ENCODE measurements at regions of chr20 and their contacts with region 1.

Region 1: GRCh38 chr20:47677635-47678453 is 107.4 kb downstream of the SULF2 start:
- DNase-seq: peak; percentile 35
- H3K4me3 ChIP-seq: no peak overlapping the region
- H3K27ac ChIP-seq: no peak overlapping the region
- H3K4me1 ChIP-seq: no peaks in the 10 kb centered on the region
- H3K27me3 ChIP-seq: no peaks in the 10 kb centered on the region
- CTCF ChIP-seq: peak; percentile 91

Region 2: GRCh38 chr20:47586646-47587306 is 91.1 kb before region 1 on chr20:
- CTCF ChIA-PET with region 1: no interaction called
- POLR2A ChIA-PET with region 1: no interaction called
- intact Hi-C with region 1: no loop called
- DNase-seq: peak; percentile 61
- H3K4me3 ChIP-seq: no peak overlapping the region
- H3K27ac ChIP-seq: peak overlapping the region; percentile 51
- H3K4me1 ChIP-seq: peaks cover 11% of the 10 kb centered on the region
- H3K27me3 ChIP-seq: no peaks in the 10 kb centered on the region
- CTCF ChIP-seq: no peak

Region 3: GRCh38 chr20:48295445-48295963 is 617.7 kb after region 1 on chr20:
- CTCF ChIA-PET with region 1: interaction called, 3 read pairs
- POLR2A ChIA-PET with region 1: no interaction called
- intact Hi-C with region 1: loop called (anchors 10 kb)
- DNase-seq: peak; percentile 56
- H3K4me3 ChIP-seq: no peak overlapping the region
- H3K27ac ChIP-seq: no peak overlapping the region
- H3K4me1 ChIP-seq: peaks cover 13% of the 10 kb centered on the region
- H3K27me3 ChIP-seq: peaks cover 8% of the 10 kb centered on the region
- CTCF ChIP-seq: 0 out of 2 replicates have a peak, but pooled peaks have one; percentile 23